Ascending aorta (tissue), 2 donors: ENCODE measurements at regions of chr15 and their contacts with region 1.

Region 1: GRCh38 chr15:45457641-45458433 is 64.7 kb downstream of the SLC30A4 start:
- DNase-seq: peak in 1 of 2 donors; percentile 87
- H3K4me3 ChIP-seq: peak overlapping the region; percentile 45 to 63
- H3K27ac ChIP-seq: peak overlapping the region; percentile 47 to 70
- H3K4me1 ChIP-seq: peaks cover 0 to 3% of the 10 kb centered on the region in 2 donors
- H3K27me3 ChIP-seq: no peaks in the 10 kb centered on the region
- CTCF ChIP-seq: peak; percentile 63 to 66 (median 65)

Region 2: GRCh38 chr15:44728576-44729407 is 729.0 kb before region 1 on chr15:
- intact Hi-C with region 1: loop called (anchors 5 kb)
- DNase-seq: peak; percentile 95 to 99
- H3K4me3 ChIP-seq: peak overlapping the region; percentile 72 to 77
- H3K27ac ChIP-seq: peak overlapping the region; percentile 88 to 96
- H3K4me1 ChIP-seq: peaks cover 0 to 21% of the 10 kb centered on the region in 2 donors
- H3K27me3 ChIP-seq: no peaks in the 10 kb centered on the region
- CTCF ChIP-seq: no peak

Region 3: GRCh38 chr15:45187894-45188830 is 269.7 kb before region 1 on chr15 and contains the start of gene SHF:
- intact Hi-C with region 1: loop called (anchors 5 kb)
- DNase-seq: peak in 1 of 2 donors; percentile 86
- H3K4me3 ChIP-seq: peak within 1 kb of the TSS; percentile 79 to 94
- H3K27ac ChIP-seq: peak within 1 kb of the TSS; percentile 89 to 98
- H3K4me1 ChIP-seq: peaks cover 0 to 5% of the 10 kb centered on the region in 2 donors
- H3K27me3 ChIP-seq: no peaks in the 10 kb centered on the region
- CTCF ChIP-seq: no peak
- total RNA-seq, gene SHF: 75.0 TPM

Region 4: DNA sequence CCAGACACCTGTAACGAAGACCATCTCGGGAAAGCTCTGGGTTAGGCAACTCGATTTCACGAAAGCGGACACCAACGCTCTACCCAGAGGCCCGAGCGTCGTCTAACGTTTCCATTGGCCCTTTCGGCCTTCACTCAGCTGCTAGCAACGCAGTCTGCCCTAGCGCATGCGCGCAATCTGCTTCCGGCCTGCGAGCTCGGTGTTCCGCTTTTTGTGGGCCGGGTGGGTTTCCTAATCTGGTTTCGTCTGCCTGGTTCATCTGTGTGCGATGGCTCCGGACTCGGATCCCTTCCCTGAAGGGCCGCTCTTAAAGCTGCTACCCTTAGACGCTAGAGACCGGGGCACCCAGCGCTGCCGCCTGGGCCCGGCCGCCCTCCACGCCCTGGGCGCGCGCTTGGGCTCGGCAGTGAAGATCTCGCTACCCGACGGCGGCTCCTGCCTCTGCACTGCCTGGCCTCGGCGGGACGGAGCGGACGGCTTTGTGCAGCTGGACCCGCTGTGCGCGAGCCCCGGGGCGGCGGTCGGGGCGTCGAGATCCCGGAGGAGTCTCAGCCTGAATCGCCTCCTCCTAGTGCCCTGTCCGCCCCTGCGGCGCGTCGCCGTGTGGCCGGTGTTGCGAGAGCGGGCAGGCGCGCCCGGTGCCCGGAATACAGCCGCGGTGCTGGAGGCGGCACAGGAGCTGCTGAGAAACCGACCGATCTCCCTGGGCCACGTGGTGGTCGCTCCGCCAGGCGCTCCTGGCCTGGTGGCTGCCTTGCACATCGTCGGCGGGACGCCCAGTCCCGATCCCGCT is 55.5 kb before region 1 on chr15:
- intact Hi-C with region 1: loop called (anchors 10 kb)
- DNase-seq: peak; percentile 80 to 97
- H3K4me3 ChIP-seq: peak overlapping the region; percentile 92 to 94
- H3K27ac ChIP-seq: peak overlapping the region; percentile 85 to 92
- H3K4me1 ChIP-seq: peaks cover 3 to 18% of the 10 kb centered on the region in 2 donors
- H3K27me3 ChIP-seq: no peaks in the 10 kb centered on the region
- CTCF ChIP-seq: peak in 1 of 3 experiments; percentile 14

Region 5: GRCh38 chr15:45611305-45611704 is 153.5 kb after region 1 on chr15:
- intact Hi-C with region 1: loop called (anchors 5 kb)
- DNase-seq: no peak
- H3K4me3 ChIP-seq: no peak overlapping the region
- H3K27ac ChIP-seq: no peak overlapping the region
- H3K4me1 ChIP-seq: no peaks in the 10 kb centered on the region
- H3K27me3 ChIP-seq: no peaks in the 10 kb centered on the region
- CTCF ChIP-seq: peak in 1 of 3 experiments; percentile 27